GM12878 (cell line): ENCODE measurements at regions of chr5 and their contacts with region 1.

Region 1: GRCh38 chr5:131357739-131358561 is 94.1 kb downstream of the CDC42SE2 start:
- DNase-seq: no peak
- ATAC-seq: peak; percentile 74
- H3K4me3 ChIP-seq: no peak overlapping the region
- H3K27ac ChIP-seq: peak overlapping the region; percentile 45
- H3K4me1 ChIP-seq: peaks cover 35% of the 10 kb centered on the region
- H3K27me3 ChIP-seq: no peaks in the 10 kb centered on the region
- CTCF ChIP-seq: peak in 2 of 3 experiments; percentile 7 to 28; a peak in 2 of 6 replicates
- EP300 ChIP-seq: no peak
- POLR2A ChIP-seq: no peak
- RAD21 ChIP-seq: peak; percentile 56

Region 2: DNA sequence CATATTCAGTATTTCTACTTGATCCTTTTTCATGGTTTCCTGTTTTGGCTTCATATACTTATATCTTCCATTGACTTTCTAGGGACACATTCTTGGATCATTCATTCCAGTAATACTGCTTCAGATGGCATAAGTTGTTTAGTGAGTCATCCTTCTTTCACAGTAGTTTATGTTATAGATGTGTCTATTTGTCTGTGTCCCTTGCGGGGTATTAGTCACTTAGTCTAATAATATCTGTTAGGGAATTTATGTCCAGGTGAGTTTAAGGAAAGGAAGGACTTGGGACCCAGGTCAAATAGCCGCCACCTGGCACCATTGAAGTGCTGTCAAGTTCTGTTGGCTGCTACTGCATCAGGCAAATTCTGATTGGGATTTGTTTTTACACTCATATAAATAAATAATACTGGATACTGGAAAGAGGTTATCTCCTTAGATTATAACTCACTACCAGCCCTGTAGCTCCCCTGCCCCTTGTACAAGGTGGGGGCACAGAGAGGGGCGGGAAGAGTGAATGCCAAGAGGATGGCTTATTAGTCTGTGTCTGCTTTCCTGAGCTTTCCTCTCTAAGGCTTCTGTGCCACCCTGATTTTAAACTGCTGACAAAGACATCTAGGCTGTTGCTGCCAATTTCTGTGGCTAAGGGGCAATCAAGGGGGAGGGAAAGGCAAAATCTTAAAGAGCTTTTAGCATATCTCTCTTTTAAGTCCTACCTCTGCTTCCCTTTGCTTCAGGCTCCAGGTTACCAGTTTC is 29.2 kb before region 1 on chr5:
- CTCF ChIA-PET with region 1: no interaction called
- POLR2A ChIA-PET with region 1: interaction called, 5 read pairs
- RAD21 ChIA-PET with region 1: interaction called, 11 read pairs
- SMC1A ChIA-PET with region 1: interaction called, 5 read pairs
- in situ Hi-C with region 1: no loop called
- intact Hi-C with region 1: no loop called
- DNase-seq: no peak
- ATAC-seq: peak; percentile 36
- H3K4me3 ChIP-seq: no peak overlapping the region
- H3K27ac ChIP-seq: peak overlapping the region; percentile 15; the same call in 1 of the 2 replicates
- H3K4me1 ChIP-seq: peaks cover 3% of the 10 kb centered on the region; the same call in 1 of the 2 replicates
- H3K27me3 ChIP-seq: no peaks in the 10 kb centered on the region
- CTCF ChIP-seq: no peak
- EP300 ChIP-seq: no peak
- POLR2A ChIP-seq: no peak
- RAD21 ChIP-seq: no peak

Region 3: DNA sequence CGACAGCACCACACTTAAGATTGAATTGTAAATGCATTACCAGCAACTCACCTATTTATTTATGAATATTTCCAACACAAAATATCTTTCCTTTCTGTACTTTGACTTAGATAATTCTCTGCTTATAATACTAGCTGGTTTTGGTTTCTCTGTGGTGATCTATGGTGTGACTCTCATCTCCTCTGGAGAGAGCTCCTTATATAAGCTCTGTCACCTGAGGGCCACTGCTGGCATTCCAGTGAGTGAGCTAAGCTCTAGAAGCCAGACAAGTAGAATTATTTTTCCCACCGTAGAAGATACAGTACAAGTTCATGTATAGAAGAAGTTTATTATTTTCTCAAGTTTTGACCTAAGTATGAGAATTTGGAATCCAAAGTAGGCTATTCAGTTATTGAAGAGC is 17.4 kb after region 1 on chr5:
- CTCF ChIA-PET with region 1: interaction called, 8 read pairs
- POLR2A ChIA-PET with region 1: interaction called, 8 read pairs
- RAD21 ChIA-PET with region 1: interaction called, 11 read pairs
- SMC1A ChIA-PET with region 1: interaction called, 17 read pairs
- in situ Hi-C with region 1: no loop called
- intact Hi-C with region 1: no loop called
- DNase-seq: no peak
- ATAC-seq: peak; percentile 35
- H3K4me3 ChIP-seq: peak overlapping the region; percentile 37; the same call in 1 of the 2 replicates
- H3K27ac ChIP-seq: peak overlapping the region; percentile 88
- H3K4me1 ChIP-seq: peaks cover 77% of the 10 kb centered on the region
- H3K27me3 ChIP-seq: no peaks in the 10 kb centered on the region
- CTCF ChIP-seq: no peak
- EP300 ChIP-seq: no peak
- POLR2A ChIP-seq: no peak
- RAD21 ChIP-seq: no peak

Region 4: GRCh38 chr5:131694926-131695325 is 337.0 kb after region 1 on chr5:
- CTCF ChIA-PET with region 1: no interaction called
- POLR2A ChIA-PET with region 1: no interaction called
- RAD21 ChIA-PET with region 1: no interaction called
- SMC1A ChIA-PET with region 1: no interaction called
- in situ Hi-C with region 1: no loop called
- intact Hi-C with region 1: no loop called
- DNase-seq: no peak
- ATAC-seq: no peak
- H3K4me3 ChIP-seq: no peak overlapping the region
- H3K27ac ChIP-seq: no peak overlapping the region
- H3K4me1 ChIP-seq: no peaks in the 10 kb centered on the region
- H3K27me3 ChIP-seq: no peaks in the 10 kb centered on the region
- CTCF ChIP-seq: no peak
- EP300 ChIP-seq: no peak
- POLR2A ChIP-seq: no peak
- RAD21 ChIP-seq: no peak